Heart left ventricle (tissue), 16 donors: ENCODE measurements at regions of chr3 and their contacts with region 1.

Region 1: GRCh38 chr3:32467333-32468070 is 35.1 kb downstream of the CMTM6 start:
- DNase-seq: peak; percentile 59 to 89 (median 68)
- ATAC-seq: peak; percentile 40 to 94 (median 88)
- H3K4me3 ChIP-seq: peak overlapping the region in 10 of 12 donors; percentile 25 to 57 (median 46)
- H3K27ac ChIP-seq: peak overlapping the region in 2 of 12 donors; percentile 35 to 51
- H3K4me1 ChIP-seq: peaks cover 0 to 36% (median 9%) of the 10 kb centered on the region in 12 donors
- H3K27me3 ChIP-seq: no peaks in the 10 kb centered on the region
- CTCF ChIP-seq: peak; percentile 98 to 100 (median 99)
- POLR2A ChIP-seq: peak in 1 of 2 donors; percentile 15

Region 2: DNA sequence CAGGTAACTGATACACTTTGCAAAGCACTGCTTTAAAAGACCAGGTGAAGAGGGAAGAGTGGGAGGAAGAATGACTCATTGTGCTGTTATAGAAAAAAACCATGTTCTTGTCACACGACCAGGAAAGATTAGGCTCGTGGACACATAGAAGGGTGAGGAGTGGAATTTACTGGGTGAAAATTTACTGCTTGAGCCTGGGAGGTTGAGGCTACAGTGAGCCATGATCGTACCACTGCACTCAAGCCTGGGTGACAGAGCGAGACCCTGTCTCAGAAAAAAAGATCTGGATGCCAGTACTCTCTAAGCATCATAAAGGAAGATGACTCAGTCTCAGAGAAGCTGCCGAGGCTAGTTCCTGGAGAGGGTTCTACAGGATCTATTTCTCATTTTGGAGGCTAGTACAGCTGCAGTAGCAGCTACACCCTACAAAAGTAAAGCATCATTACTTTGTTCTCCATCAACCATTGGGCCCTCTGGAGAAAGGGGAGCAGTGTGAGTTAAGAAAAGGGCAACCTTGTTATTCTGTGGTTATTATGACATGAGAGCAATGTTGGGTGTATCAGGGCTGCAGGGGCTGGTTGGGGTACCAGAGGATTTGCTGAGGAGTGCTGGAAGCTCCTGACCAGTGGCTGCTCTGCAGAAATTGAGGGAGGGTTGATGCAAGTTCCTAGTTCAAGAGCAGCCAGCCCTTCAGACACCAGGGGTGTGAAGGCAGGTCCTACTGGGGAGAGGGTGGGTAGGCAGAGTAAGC is 153.6 kb before region 1 on chr3:
- intact Hi-C with region 1: loop called in 1 of 10 experiments (anchors 10 kb)
- DNase-seq: no peak
- ATAC-seq: peak in 3 of 4 donors; percentile 28 to 57 (median 44)
- H3K4me3 ChIP-seq: no peak overlapping the region
- H3K27ac ChIP-seq: peak overlapping the region in 1 of 12 donors; percentile 8
- H3K4me1 ChIP-seq: peaks cover 0 to 31% (median 17%) of the 10 kb centered on the region in 12 donors
- H3K27me3 ChIP-seq: no peaks in the 10 kb centered on the region
- CTCF ChIP-seq: no peak
- POLR2A ChIP-seq: no peak

Region 3: GRCh38 chr3:32391643-32392535 is 75.6 kb before region 1 on chr3 and contains the start of gene CMTM7:
- intact Hi-C with region 1: loop called in 4 of 10 experiments (anchors 5 kb)
- DNase-seq: peak; percentile 73 to 87 (median 75)
- ATAC-seq: peak; percentile 60 to 94 (median 87)
- H3K4me3 ChIP-seq: peak within 1 kb of the TSS; percentile 51 to 98 (median 77)
- H3K27ac ChIP-seq: peak within 1 kb of the TSS; percentile 14 to 95 (median 84)
- H3K4me1 ChIP-seq: peaks cover 0 to 43% (median 9%) of the 10 kb centered on the region in 12 donors
- H3K27me3 ChIP-seq: no peaks in the 10 kb centered on the region
- CTCF ChIP-seq: no peak
- POLR2A ChIP-seq: peak in 1 of 2 donors; percentile 67
- total RNA-seq, gene CMTM7: 2.3 to 16.8 (median 3.6) TPM

Region 4: GRCh38 chr3:32401556-32402081 is 65.9 kb before region 1 on chr3:
- intact Hi-C with region 1: loop called in 1 of 10 experiments (anchors 10 kb)
- DNase-seq: peak; percentile 85 to 94 (median 86)
- ATAC-seq: peak; percentile 70 to 94 (median 90)
- H3K4me3 ChIP-seq: peak overlapping the region; percentile 2 to 61 (median 50)
- H3K27ac ChIP-seq: peak overlapping the region; percentile 70 to 97 (median 86)
- H3K4me1 ChIP-seq: peaks cover 0 to 93% (median 27%) of the 10 kb centered on the region in 12 donors
- H3K27me3 ChIP-seq: no peaks in the 10 kb centered on the region
- CTCF ChIP-seq: no peak
- POLR2A ChIP-seq: peak in 1 of 2 donors; percentile 25